B cell (primary cell): ENCODE measurements at regions of chr5 and their contacts with region 1.

Region 1: GRCh38 chr5:159915904-159916840 is at the start of gene ADRA1B:
- DNase-seq: peak; percentile 65
- ATAC-seq: peak; percentile 90
- H3K4me3 ChIP-seq: peak within 1 kb of the TSS in 2 of 5 experiments; percentile 29 to 48
- H3K4me3 Mint-ChIP-seq: peak within 1 kb of the TSS; percentile 80
- H3K27ac ChIP-seq: no peak within 1 kb of the TSS
- H3K27ac Mint-ChIP-seq: no peak within 1 kb of the TSS
- H3K4me1 ChIP-seq: peaks cover 10 to 15% of the 10 kb centered on the region in 2 donors
- H3K4me1 Mint-ChIP-seq: peaks cover 16% of the 10 kb centered on the region
- H3K27me3 ChIP-seq: peaks cover 0 to 43% (median 19%) of the 10 kb centered on the region in 4 experiments
- H3K27me3 Mint-ChIP-seq: peaks cover 51% of the 10 kb centered on the region
- CTCF ChIP-seq: peak; percentile 66
- total RNA-seq, gene ADRA1B: not detected in 2 replicates

Region 2: DNA sequence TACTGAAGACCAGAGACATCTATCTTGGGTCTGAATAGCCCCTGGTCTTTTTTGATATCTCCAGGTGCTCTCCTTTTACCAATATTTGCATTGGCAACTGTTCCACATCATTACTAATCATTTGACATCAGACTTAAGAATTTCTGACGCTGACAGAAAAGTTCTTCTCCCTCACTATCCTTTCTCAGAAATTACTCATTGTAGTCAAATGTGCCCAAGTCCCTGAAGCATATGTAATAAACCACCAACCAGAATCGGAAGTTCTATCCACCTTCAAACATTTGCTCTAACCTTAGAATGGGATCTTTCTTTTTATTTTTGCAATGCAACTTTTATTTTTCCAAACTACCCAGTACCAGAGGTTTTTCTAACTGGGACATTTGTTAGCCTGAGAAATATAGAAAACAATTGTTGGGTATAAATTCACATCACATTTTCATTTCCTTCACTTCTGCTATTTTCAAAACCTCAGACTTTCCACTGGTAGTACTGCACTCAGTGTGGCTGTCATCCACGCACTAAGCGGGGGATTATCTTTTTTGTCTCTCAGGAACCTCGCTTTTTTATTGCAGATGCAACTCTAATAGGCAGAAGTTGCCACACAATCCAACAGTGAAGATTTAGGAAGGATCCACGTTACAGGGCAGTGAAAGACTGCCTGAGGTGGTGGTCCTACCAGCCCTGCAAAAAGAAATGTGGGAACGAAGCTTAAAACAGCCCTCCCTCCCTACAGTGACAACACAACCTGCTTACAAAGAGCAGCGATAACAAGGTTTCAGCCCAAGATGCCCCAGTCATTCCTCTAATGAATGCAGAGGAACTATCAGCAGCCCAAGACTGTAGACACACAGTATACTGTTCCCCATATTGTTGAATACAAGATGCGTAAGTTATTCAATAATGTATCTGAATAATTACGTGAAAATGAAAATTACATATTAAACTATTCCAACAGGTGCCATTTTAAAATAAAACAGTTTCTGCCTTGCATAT is 1017.7 kb before region 1 on chr5:
- CTCF ChIA-PET with region 1: no interaction called
- POLR2A ChIA-PET with region 1: no interaction called
- intact Hi-C with region 1: no loop called
- DNase-seq: peak; percentile 77
- ATAC-seq: peak; percentile 79
- H3K4me3 ChIP-seq: peak overlapping the region in 3 of 5 experiments; percentile 1 to 21 (median 18)
- H3K4me3 Mint-ChIP-seq: peak overlapping the region; percentile 58
- H3K27ac ChIP-seq: peak overlapping the region; percentile 76 to 83
- H3K27ac Mint-ChIP-seq: peak overlapping the region; percentile 70
- H3K4me1 ChIP-seq: peaks cover 35% of the 10 kb centered on the region in 2 donors
- H3K4me1 Mint-ChIP-seq: peaks cover 77% of the 10 kb centered on the region
- H3K27me3 ChIP-seq: no peaks in the 10 kb centered on the region
- H3K27me3 Mint-ChIP-seq: no peaks in the 10 kb centered on the region
- CTCF ChIP-seq: no peak

Region 3: DNA sequence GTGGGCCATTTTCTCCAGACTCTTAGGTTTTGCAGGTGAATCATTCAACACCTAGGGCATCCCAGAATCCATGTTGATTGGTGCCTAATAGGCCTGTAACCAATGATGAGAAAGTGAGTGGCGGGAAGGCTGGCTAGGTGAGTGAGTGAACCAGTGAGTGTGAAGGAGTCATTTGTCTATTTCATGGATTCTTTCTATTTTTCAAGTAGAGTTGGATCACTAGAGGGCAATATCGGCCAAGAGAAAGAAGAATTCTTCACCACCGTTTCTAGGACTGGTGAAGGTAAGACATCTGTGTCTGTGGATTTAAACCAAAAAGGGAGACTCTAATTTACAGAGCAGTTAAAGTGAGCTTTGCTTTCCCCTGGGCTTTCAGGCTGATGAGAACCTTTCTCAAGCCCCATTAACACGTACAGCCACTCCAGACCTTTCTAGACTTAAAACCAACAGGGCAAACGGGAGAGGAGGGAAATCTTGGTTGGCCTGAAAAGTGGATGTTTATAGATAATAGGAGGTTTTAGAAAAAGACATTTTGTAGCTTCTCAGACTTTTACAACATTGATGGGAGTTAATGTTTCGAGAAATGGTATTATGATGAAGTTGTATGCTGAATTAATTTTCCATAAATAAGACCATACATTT is 471.6 kb before region 1 on chr5:
- CTCF ChIA-PET with region 1: interaction called, 5 read pairs
- POLR2A ChIA-PET with region 1: no interaction called
- intact Hi-C with region 1: loop called (anchors 1 kb)
- DNase-seq: peak; percentile 46
- ATAC-seq: no peak
- H3K4me3 ChIP-seq: no peak overlapping the region
- H3K4me3 Mint-ChIP-seq: no peak overlapping the region
- H3K27ac ChIP-seq: no peak overlapping the region
- H3K27ac Mint-ChIP-seq: peak overlapping the region; percentile 42
- H3K4me1 ChIP-seq: peaks cover 0 to 7% of the 10 kb centered on the region in 2 donors
- H3K4me1 Mint-ChIP-seq: peaks cover 8% of the 10 kb centered on the region
- H3K27me3 ChIP-seq: no peaks in the 10 kb centered on the region
- H3K27me3 Mint-ChIP-seq: no peaks in the 10 kb centered on the region
- CTCF ChIP-seq: peak; percentile 28

Region 4: GRCh38 chr5:159515909-159516415 is 400.2 kb before region 1 on chr5:
- CTCF ChIA-PET with region 1: interaction called, 3 read pairs
- POLR2A ChIA-PET with region 1: no interaction called
- intact Hi-C with region 1: loop called (anchors 5 kb)
- DNase-seq: peak; percentile 62
- ATAC-seq: peak; percentile 85
- H3K4me3 ChIP-seq: no peak overlapping the region
- H3K4me3 Mint-ChIP-seq: no peak overlapping the region
- H3K27ac ChIP-seq: no peak overlapping the region
- H3K27ac Mint-ChIP-seq: no peak overlapping the region
- H3K4me1 ChIP-seq: peaks cover 3 to 6% of the 10 kb centered on the region in 2 donors
- H3K4me1 Mint-ChIP-seq: peaks cover 6% of the 10 kb centered on the region
- H3K27me3 ChIP-seq: peaks cover 0 to 3% (median 0%) of the 10 kb centered on the region in 4 experiments
- H3K27me3 Mint-ChIP-seq: no peaks in the 10 kb centered on the region
- CTCF ChIP-seq: peak; percentile 75

Region 5: GRCh38 chr5:159864885-159865691 is 51.1 kb before region 1 on chr5:
- CTCF ChIA-PET with region 1: no interaction called
- POLR2A ChIA-PET with region 1: no interaction called
- intact Hi-C with region 1: no loop called
- DNase-seq: no peak
- ATAC-seq: no peak
- H3K4me3 ChIP-seq: no peak overlapping the region
- H3K4me3 Mint-ChIP-seq: no peak overlapping the region
- H3K27ac ChIP-seq: no peak overlapping the region
- H3K27ac Mint-ChIP-seq: no peak overlapping the region
- H3K4me1 ChIP-seq: no peaks in the 10 kb centered on the region
- H3K4me1 Mint-ChIP-seq: peaks cover 3% of the 10 kb centered on the region
- H3K27me3 ChIP-seq: peaks cover 0 to 23% (median 5%) of the 10 kb centered on the region in 4 experiments
- H3K27me3 Mint-ChIP-seq: peaks cover 35% of the 10 kb centered on the region
- CTCF ChIP-seq: no peak